H1 (cell line): ENCODE measurements at regions of chr15 and their contacts with region 1.

Region 1: DNA sequence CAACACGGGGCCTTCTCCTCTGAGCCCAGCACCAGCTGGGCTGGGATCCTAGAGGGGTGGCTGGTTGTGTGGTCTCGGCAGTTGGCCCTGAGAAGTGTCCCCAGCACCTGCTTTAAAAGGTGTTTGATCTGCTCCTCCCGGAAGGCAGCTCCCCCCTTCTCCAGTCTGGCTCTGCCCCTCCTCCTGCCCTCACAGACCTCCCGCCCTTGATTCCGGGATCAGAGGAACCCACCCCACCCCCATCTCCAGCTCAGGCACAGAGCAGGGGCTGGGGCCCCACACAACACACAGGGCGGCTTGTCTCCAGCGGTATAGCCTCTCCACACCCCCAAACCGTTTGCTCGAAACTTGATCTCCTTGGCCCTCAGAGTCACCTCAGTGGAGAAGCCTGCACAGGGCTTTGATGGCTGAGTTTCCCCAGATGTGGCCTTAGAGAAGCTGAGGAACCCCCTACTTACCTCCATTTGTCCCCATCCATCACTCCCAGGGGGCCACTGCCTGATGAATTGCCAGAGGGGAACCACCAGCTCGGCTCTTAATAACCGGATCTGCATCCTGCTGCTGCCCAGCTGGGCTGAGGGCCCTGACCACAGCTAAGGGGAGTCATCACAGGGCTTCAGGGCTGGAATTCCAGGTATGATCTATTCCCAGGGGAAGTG is 6.4 kb upstream of the STRA6 start:
- DNase-seq: peak in 1 of 2 experiments; percentile 73
- H3K4me3 ChIP-seq: peak overlapping the region in 1 of 4 experiments; percentile 21; a peak in 4 of 8 replicates
- H3K27ac ChIP-seq: no peak overlapping the region
- H3K4me1 ChIP-seq: peaks cover 22 to 59% (median 42%) of the 10 kb centered on the region in 4 experiments
- H3K27me3 ChIP-seq: peaks cover 0 to 11% (median 4%) of the 10 kb centered on the region in 4 experiments; a peak in 3 of 7 replicates
- CTCF ChIP-seq: no peak
- EP300 ChIP-seq: no peak
- POLR2A ChIP-seq: no peak
- RAD21 ChIP-seq: no peak

Region 2: GRCh38 chr15:73972984-73973682 is 235.9 kb before region 1 on chr15:
- CTCF ChIA-PET with region 1: no interaction called
- POLR2A ChIA-PET with region 1: no interaction called
- DNase-seq: peak; percentile 54 to 92
- H3K4me3 ChIP-seq: peak overlapping the region in 1 of 4 experiments; percentile 44; a peak in 1 of 8 replicates
- H3K27ac ChIP-seq: no peak overlapping the region
- H3K4me1 ChIP-seq: peaks cover 0 to 8% (median 2%) of the 10 kb centered on the region in 4 experiments; a peak in 4 of 7 replicates
- H3K27me3 ChIP-seq: peaks cover 0 to 4% (median 2%) of the 10 kb centered on the region in 4 experiments; a peak in 3 of 7 replicates
- CTCF ChIP-seq: peak; percentile 82 to 94 (median 91)
- EP300 ChIP-seq: no peak
- POLR2A ChIP-seq: no peak
- RAD21 ChIP-seq: peak; percentile 97 to 99

Region 3: GRCh38 chr15:74222240-74223119 is 13.4 kb after region 1 on chr15:
- CTCF ChIA-PET with region 1: interaction called, 5 read pairs
- POLR2A ChIA-PET with region 1: interaction called, 58 read pairs
- DNase-seq: no peak
- H3K4me3 ChIP-seq: peak overlapping the region in 1 of 4 experiments; percentile 36; a peak in 1 of 8 replicates
- H3K27ac ChIP-seq: no peak overlapping the region
- H3K4me1 ChIP-seq: peaks cover 3 to 45% (median 30%) of the 10 kb centered on the region in 4 experiments
- H3K27me3 ChIP-seq: peaks cover 25 to 92% (median 86%) of the 10 kb centered on the region in 4 experiments
- CTCF ChIP-seq: no peak
- EP300 ChIP-seq: no peak
- POLR2A ChIP-seq: no peak
- RAD21 ChIP-seq: no peak

Region 4: DNA sequence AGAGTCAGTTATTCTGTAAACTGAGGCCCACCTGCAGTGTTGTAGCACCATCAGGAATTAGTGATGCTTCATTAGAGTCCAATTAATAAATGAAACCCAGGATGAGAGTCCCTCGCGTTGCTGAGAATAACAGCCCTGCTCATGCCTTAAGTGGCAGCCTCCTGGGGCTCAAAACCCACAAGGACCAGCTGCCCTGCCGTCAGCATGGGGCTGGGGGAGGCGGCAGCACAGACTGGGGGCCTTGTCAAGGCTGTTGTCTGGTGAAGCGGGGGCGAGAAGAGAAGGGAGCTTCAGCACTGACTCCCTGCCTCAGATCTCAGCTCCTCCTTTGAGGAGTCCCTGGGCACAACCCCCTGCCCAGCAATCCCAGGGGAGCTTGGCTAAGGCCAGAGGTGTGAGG is 48.1 kb after region 1 on chr15:
- CTCF ChIA-PET with region 1: no interaction called
- POLR2A ChIA-PET with region 1: no interaction called
- DNase-seq: no peak
- H3K4me3 ChIP-seq: no peak overlapping the region
- H3K27ac ChIP-seq: no peak overlapping the region
- H3K4me1 ChIP-seq: peaks cover 3 to 19% (median 12%) of the 10 kb centered on the region in 4 experiments
- H3K27me3 ChIP-seq: no peaks in the 10 kb centered on the region; a peak in 1 of 7 replicates
- CTCF ChIP-seq: no peak
- EP300 ChIP-seq: no peak
- POLR2A ChIP-seq: no peak
- RAD21 ChIP-seq: no peak

Region 5: GRCh38 chr15:74422650-74423430 is 213.8 kb after region 1 on chr15:
- CTCF ChIA-PET with region 1: no interaction called
- POLR2A ChIA-PET with region 1: no interaction called
- DNase-seq: peak in 1 of 2 experiments; percentile 70
- H3K4me3 ChIP-seq: no peak overlapping the region
- H3K27ac ChIP-seq: no peak overlapping the region
- H3K4me1 ChIP-seq: peaks cover 7 to 27% (median 20%) of the 10 kb centered on the region in 4 experiments
- H3K27me3 ChIP-seq: no peaks in the 10 kb centered on the region
- CTCF ChIP-seq: no peak
- EP300 ChIP-seq: no peak
- POLR2A ChIP-seq: no peak
- RAD21 ChIP-seq: no peak